PC-3 (cell line): ENCODE measurements at regions of chrX and their contacts with region 1.

Region 1: DNA sequence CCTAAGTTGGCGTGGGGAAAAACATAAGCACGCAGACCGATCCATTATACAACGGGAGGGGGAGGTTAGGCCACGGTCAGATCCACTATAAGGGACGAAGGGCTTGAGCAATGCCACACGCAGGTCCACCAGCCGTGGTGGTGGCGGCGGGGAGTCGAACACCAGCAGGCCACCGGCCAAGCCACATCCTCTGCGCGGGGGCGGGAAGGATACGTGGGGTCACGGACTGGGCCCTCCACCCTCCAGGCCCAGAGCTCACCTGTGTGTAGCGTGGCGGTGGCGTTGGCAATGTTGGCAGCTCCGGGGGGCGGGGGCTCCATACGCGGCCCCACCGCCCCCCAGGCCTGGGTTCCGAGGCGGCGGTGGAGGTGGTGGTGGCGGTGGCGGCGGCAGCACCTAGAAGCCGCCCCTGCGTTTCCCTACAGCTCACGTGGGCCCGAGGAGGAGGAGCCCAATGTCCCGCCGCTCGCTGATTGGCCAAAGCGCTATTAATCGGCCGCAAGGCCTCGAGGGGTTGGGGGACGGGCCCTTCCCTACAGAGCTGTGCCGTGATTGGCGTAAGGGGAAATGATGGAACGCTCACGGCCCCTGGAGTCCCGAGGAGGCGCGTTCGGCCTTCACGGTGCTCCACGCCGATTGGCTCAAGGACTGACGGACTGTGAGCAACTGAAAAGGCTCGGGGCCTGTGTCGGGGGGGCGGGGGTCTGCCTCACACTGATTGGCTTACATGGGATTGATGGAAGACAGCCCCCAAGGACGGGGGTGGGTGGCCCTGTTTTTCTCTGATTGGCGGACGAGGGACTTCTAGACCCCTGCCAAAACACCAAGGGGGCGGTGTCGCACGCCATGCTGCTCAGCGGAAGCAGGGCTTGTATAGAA is at the start of gene ELK1:
- DNase-seq: peak; percentile 97
- ATAC-seq: peak; percentile 94
- H3K4me3 ChIP-seq: peak within 1 kb of the TSS; percentile 91
- H3K27ac ChIP-seq: peak within 1 kb of the TSS; percentile 50
- H3K4me1 ChIP-seq: peaks cover 13% of the 10 kb centered on the region
- H3K27me3 ChIP-seq: no peaks in the 10 kb centered on the region
- CTCF ChIP-seq: no peak
- total RNA-seq, gene ELK1: 59.0 and 63.1 TPM in 2 replicates

Region 2: DNA sequence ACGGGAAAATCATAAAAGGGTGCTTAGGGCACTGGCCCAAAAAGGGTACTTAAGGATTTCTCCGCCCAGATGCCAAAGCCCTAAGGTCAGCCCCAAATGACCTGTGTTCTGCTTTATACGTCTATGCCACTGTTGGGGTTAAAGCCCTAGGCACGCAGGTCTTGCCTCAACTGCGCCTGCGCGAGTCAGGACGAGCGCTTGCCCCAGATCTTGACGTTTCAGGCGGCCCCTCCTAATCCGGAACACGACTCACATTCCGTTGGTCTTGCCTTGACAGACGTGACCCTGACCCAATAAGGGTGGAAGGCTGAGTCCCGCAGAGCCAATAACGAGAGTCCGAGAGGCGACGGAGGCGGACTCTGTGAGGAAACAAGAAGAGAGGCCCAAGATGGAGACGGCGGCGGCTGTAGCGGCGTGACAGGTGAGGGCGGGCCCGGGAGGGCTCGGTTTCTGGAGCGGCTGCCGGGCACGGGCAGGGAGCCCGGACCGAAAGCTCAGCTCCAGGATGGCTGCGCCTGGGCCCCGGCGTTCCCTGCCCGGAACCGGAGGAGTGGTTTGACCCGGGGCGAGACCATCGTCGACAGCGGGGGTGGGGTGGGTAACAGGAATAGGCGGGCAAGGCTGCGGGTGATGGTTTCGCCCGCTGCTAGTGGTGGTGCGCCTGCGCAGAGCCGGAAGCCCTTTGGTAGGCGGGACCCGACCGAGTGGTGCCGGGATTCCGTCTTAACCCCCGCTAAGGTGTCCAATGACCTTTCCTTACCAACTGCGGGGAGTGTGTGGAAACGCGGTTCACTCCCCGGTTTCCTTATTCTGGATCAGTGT is 89.4 kb before region 1 on chrX and contains the start of gene ARAF:
- CTCF ChIA-PET with region 1: no interaction called
- POLR2A ChIA-PET with region 1: no interaction called
- intact Hi-C with region 1: loop called (anchors 2 kb)
- DNase-seq: peak; percentile 99
- ATAC-seq: peak; percentile 87
- H3K4me3 ChIP-seq: peak within 1 kb of the TSS; percentile 99
- H3K27ac ChIP-seq: peak within 1 kb of the TSS; percentile 81
- H3K4me1 ChIP-seq: peaks cover 32% of the 10 kb centered on the region
- H3K27me3 ChIP-seq: no peaks in the 10 kb centered on the region
- CTCF ChIP-seq: no peak
- total RNA-seq, gene ARAF: 52.6 and 77.1 TPM in 2 replicates

Region 3: DNA sequence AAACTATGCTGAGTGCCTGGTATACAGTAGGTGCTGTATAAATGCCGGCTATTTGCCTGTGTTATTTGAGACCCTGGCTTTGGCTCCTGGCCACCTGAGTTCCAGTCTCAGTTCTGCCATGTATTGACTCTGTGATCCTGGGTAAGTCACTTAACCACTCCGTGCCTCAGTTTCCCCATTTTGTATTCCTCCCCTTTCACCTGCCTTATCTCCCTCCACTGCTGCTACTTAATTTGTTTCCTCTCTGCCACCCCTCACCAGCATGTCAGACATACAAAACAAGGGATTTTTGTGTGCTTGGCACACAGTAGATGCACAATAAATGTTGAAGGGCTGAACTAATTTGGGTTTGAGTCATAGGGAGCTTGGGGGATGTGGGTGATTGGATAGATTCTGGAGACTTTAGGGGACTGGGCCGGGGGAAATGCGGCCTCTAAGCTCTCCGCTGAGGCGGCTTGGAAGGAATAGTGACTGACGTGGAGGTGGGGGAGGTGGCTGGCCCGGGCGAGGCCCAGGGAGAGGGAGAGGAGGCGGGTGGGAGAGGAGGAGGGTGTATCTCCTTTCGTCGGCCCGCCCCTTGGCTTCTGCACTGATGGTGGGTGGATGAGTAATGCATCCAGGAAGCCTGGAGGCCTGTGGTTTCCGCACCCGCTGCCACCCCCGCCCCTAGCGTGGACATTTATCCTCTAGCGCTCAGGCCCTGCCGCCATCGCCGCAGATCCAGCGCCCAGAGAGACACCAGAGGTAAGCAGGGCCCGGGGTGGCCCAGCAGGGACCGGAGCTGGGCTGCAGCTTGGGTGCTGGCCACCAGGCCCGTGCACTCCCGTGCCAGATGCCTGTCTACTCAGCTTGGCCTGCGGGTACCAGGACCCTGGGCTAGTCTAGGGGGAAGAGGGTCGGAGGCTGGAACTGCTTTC is 68.4 kb before region 1 on chrX and contains the start of gene TIMP1:
- CTCF ChIA-PET with region 1: no interaction called
- POLR2A ChIA-PET with region 1: no interaction called
- intact Hi-C with region 1: loop called (anchors 5 kb)
- DNase-seq: peak; percentile 94
- ATAC-seq: peak; percentile 92
- H3K4me3 ChIP-seq: peak within 1 kb of the TSS; percentile 83
- H3K27ac ChIP-seq: peak within 1 kb of the TSS; percentile 56
- H3K4me1 ChIP-seq: peaks cover 31% of the 10 kb centered on the region
- H3K27me3 ChIP-seq: no peaks in the 10 kb centered on the region
- CTCF ChIP-seq: no peak
- total RNA-seq, gene TIMP1: 207 and 222 TPM in 2 replicates

Region 4: GRCh38 chrX:47608130-47608810 is 42.1 kb before region 1 on chrX:
- CTCF ChIA-PET with region 1: no interaction called
- POLR2A ChIA-PET with region 1: no interaction called
- intact Hi-C with region 1: no loop called
- DNase-seq: no peak
- ATAC-seq: no peak
- H3K4me3 ChIP-seq: no peak overlapping the region
- H3K27ac ChIP-seq: no peak overlapping the region
- H3K4me1 ChIP-seq: no peaks in the 10 kb centered on the region
- H3K27me3 ChIP-seq: no peaks in the 10 kb centered on the region
- CTCF ChIP-seq: no peak

Region 5: DNA sequence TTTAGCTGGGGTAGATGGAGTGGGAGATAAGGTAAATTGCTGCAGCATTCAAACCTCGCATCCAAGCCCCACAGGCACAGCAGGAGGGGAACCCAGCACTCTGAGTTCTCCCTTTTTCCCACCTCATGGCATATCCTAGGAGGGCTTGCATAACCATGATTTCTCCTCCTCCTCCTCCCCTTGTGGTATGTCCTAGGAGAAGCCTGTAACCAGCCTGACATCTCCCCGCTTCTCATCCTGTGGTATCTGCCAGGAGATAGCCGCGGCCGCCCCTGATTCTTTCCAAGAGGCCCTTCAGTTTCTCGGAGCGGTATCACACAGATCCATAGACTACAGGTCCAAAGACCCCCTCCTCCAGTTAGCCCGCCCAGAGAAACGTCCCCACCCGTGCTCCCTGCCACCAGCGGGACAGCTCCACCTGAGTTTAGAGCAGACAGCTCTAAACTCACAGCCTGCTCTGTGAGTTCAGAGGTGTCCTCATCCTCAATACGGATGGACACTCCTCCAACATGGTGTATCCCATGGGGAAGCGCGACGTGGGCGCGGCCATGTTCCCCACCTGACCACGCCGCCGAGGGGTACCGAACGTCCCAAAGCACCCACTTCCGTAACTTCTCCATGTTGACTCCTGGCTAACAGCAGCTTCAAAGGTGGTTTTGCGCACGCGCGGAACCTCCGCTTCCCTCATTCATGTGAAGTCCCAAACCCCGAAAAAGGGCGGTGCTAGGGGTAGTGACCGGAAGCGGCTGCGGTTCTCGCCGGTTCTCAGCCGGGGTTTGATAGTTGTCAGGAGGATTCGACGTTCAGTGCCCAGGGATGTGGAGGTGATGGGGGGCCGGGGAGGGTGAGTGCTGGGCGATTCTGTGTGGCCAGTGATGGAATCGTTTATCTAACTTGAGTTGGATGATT is 186.0 kb after region 1 on chrX and contains the start of gene ZNF81:
- CTCF ChIA-PET with region 1: no interaction called
- POLR2A ChIA-PET with region 1: no interaction called
- intact Hi-C with region 1: loop called (anchors 2 kb)
- DNase-seq: peak; percentile 97
- ATAC-seq: peak; percentile 96
- H3K4me3 ChIP-seq: peak within 1 kb of the TSS; percentile 87
- H3K27ac ChIP-seq: peak within 1 kb of the TSS; percentile 43; the same call in 1 of the 2 replicates
- H3K4me1 ChIP-seq: peaks cover 12% of the 10 kb centered on the region
- H3K27me3 ChIP-seq: no peaks in the 10 kb centered on the region
- CTCF ChIP-seq: no peak
- total RNA-seq, gene ZNF81: 4.4 and 9.5 TPM in 2 replicates

Region 6: GRCh38 chrX:48021026-48021900 is 370.9 kb after region 1 on chrX:
- CTCF ChIA-PET with region 1: no interaction called
- POLR2A ChIA-PET with region 1: no interaction called
- intact Hi-C with region 1: loop called (anchors 10 kb)
- DNase-seq: peak; percentile 68
- ATAC-seq: peak; percentile 87
- H3K4me3 ChIP-seq: peak overlapping the region; percentile 71
- H3K27ac ChIP-seq: peak overlapping the region; percentile 62
- H3K4me1 ChIP-seq: no peaks in the 10 kb centered on the region
- H3K27me3 ChIP-seq: no peaks in the 10 kb centered on the region
- CTCF ChIP-seq: no peak